ENCODE measurements at regions of chr17 and their contacts with region 1.

Region 1: GRCh38 chr17:55348749-55349354 is 72.8 kb downstream of the MMD start:
- DNase-seq: peak; percentile 38 to 77 (median 64)
- H3K4me3 ChIP-seq: no peak overlapping the region
- H3K27ac ChIP-seq: no peak overlapping the region
- H3K4me1 ChIP-seq: peaks cover 0 to 7% of the 10 kb centered on the region in 2 donors
- H3K27me3 ChIP-seq: no peaks in the 10 kb centered on the region
- CTCF ChIP-seq: peak; percentile 84 to 96 (median 87)
- POLR2A ChIP-seq: no peak

Region 2: GRCh38 chr17:54992797-54993639 is 355.8 kb before region 1 on chr17:
- intact Hi-C with region 1: loop called (anchors 5 to 10 kb)
- DNase-seq: no peak
- H3K4me3 ChIP-seq: no peak overlapping the region
- H3K27ac ChIP-seq: no peak overlapping the region
- H3K4me1 ChIP-seq: no peaks in the 10 kb centered on the region
- H3K27me3 ChIP-seq: no peaks in the 10 kb centered on the region
- CTCF ChIP-seq: peak; percentile 44 to 75 (median 66)
- POLR2A ChIP-seq: no peak

Region 3: DNA sequence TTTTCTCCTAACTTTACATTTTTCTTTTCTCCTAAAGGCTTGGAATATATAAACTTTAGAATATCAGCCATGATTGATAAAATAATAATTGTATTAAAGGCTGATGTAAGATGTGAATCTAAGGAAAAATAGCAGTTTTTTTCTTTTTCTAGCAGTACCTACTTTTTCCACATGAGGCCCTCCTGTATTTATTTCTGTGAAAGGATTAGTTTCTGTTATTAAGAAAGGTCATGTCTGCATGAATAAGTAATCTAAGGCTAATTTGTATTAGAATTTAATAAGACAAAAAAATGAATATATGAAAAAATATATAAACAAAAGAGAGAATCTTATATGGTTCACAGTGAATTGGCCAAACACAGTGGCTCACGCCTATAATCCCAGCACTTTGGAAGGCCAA is 295.0 kb before region 1 on chr17:
- intact Hi-C with region 1: loop called in 1 of 2 experiments (anchors 10 kb)
- DNase-seq: no peak
- H3K4me3 ChIP-seq: no peak overlapping the region
- H3K27ac ChIP-seq: no peak overlapping the region
- H3K4me1 ChIP-seq: no peaks in the 10 kb centered on the region
- H3K27me3 ChIP-seq: no peaks in the 10 kb centered on the region
- CTCF ChIP-seq: peak; percentile 26 to 64 (median 48)
- POLR2A ChIP-seq: no peak

Region 4: DNA sequence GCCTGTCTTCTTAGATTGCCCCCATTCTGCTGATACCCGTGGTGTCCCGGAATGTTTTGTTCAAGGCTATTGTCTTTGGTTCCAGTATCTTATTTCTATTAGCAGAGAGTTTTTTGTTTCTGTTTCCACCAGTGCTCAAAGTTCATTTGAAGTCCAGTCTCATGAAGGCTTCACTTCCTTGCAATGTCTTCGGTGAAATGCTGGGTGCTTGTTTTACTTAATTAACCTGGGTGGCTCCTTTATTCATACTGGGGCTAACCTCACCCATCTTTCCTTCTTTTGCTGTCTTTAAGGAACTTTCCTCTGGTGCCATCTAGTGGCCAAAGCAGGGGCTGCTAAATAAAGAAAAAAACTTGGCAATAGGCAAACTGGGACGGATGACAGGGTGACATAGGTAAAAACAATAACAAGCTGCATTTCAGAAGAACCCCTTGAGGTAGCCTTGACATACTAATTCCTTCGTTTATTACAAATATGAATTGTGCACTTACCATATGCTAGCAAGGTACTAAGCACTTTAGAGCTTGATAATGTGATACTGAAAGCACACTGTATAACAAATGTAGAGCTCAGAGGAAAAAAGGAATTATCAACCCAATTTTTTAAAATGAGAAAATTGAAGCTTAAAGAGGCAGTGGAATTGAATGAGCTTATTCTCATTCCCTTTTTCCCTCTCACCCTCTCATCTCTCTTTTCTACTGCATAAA is 165.2 kb after region 1 on chr17:
- intact Hi-C with region 1: loop called (anchors 10 kb)
- DNase-seq: peak; percentile 43 to 90 (median 73)
- H3K4me3 ChIP-seq: no peak overlapping the region
- H3K27ac ChIP-seq: no peak overlapping the region
- H3K4me1 ChIP-seq: peaks cover 0 to 11% of the 10 kb centered on the region in 2 donors
- H3K27me3 ChIP-seq: no peaks in the 10 kb centered on the region
- CTCF ChIP-seq: peak; percentile 83 to 94 (median 85)
- POLR2A ChIP-seq: no peak